ENCODE measurements at regions of chr7 and their contacts with region 1.

Region 1: GRCh38 chr7:74417419-74417971 is 36.2 kb upstream of the GTF2IRD1 start:
- DNase-seq: peak; percentile 71
- ATAC-seq: peak; percentile 92
- H3K4me3 ChIP-seq: no peak overlapping the region
- H3K27ac ChIP-seq: no peak overlapping the region
- H3K4me1 ChIP-seq: no peaks in the 10 kb centered on the region; the same call in 1 of the 2 replicates
- H3K27me3 ChIP-seq: no peaks in the 10 kb centered on the region
- CTCF ChIP-seq: peak; percentile 91

Region 2: DNA sequence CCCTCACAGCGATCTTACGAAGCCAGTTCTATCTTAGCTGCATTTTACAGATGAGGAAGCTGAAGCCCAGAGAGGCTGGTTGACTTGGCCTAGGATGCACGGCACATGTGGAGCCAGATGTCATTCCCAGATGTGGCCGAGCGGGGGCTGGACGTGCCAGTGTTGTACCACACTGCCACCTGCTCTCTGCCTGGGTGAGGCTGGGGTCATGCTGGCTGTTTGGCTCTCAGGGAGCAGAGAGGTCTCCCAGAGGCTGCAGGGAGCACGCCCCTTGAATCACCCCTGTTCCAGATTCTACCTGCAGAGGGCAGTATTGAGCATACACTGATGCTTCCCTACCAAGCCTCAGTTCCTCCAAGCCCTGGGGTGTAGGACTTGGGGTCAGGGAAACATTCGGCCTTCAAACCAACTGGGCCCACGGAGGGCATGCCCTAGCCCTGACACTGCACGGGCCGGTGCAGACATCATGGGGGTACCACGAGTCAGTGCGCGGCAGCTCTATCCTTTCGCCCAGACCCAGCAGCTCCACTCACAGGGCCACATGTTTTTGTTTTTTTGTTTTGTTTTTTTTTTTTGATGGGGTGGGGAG is 32.4 kb after region 1 on chr7:
- CTCF ChIA-PET with region 1: no interaction called
- POLR2A ChIA-PET with region 1: no interaction called
- intact Hi-C with region 1: loop called (anchors 2 kb)
- DNase-seq: peak; percentile 75
- ATAC-seq: no peak
- H3K4me3 ChIP-seq: no peak overlapping the region
- H3K27ac ChIP-seq: no peak overlapping the region
- H3K4me1 ChIP-seq: peaks cover 18% of the 10 kb centered on the region
- H3K27me3 ChIP-seq: no peaks in the 10 kb centered on the region
- CTCF ChIP-seq: peak; percentile 79

Region 3: DNA sequence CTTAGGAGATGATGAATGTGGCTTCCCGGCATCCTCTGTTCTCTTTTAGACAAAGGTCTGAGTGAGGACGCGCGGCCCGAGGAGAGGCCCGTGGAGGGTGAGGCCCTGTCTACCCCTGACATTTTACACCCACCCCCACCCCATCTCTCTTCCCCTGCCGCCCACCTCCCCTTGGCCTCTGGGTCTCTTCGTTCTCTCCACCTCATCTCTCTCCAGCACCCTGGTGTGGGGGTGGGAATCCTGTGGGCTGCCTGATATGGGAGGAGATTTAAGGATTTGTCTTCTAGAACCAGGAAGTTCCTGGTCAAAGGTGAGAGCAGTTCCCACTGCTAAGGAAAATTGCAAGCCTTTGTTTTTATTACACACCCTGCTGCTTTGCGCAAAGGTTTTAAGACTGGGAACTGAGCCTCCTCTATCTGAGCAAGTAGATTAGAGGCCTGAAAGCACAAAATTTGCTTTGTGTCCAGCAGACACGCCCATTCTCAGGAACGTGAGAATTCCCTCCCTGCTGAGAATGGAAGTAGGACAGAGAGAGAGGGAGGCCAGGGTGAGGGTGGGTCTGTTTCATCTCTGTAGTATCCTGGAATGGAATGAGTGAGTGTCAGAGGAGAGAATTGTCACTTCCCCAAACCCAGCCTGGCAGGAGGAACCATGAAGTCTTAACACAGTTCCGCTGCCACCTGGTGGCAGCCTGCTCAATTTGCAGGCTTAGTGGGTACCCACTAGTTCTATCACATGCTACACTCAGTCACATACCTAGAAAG is 127.4 kb after region 1 on chr7:
- CTCF ChIA-PET with region 1: no interaction called
- POLR2A ChIA-PET with region 1: no interaction called
- intact Hi-C with region 1: loop called (anchors 2 kb)
- DNase-seq: peak; percentile 79
- ATAC-seq: peak; percentile 84
- H3K4me3 ChIP-seq: no peak overlapping the region
- H3K27ac ChIP-seq: no peak overlapping the region; the same call in 1 of the 2 replicates
- H3K4me1 ChIP-seq: no peaks in the 10 kb centered on the region
- H3K27me3 ChIP-seq: no peaks in the 10 kb centered on the region
- CTCF ChIP-seq: peak; percentile 74

Region 4: GRCh38 chr7:74567318-74567668 is 149.8 kb after region 1 on chr7:
- CTCF ChIA-PET with region 1: no interaction called
- POLR2A ChIA-PET with region 1: no interaction called
- intact Hi-C with region 1: loop called (anchors 2 kb)
- DNase-seq: no peak
- ATAC-seq: no peak
- H3K4me3 ChIP-seq: no peak overlapping the region
- H3K27ac ChIP-seq: no peak overlapping the region
- H3K4me1 ChIP-seq: no peaks in the 10 kb centered on the region
- H3K27me3 ChIP-seq: no peaks in the 10 kb centered on the region
- CTCF ChIP-seq: no peak